CD14-positive monocyte (primary cell): ENCODE measurements at regions of chr18 and their contacts with region 1.

Region 1: DNA sequence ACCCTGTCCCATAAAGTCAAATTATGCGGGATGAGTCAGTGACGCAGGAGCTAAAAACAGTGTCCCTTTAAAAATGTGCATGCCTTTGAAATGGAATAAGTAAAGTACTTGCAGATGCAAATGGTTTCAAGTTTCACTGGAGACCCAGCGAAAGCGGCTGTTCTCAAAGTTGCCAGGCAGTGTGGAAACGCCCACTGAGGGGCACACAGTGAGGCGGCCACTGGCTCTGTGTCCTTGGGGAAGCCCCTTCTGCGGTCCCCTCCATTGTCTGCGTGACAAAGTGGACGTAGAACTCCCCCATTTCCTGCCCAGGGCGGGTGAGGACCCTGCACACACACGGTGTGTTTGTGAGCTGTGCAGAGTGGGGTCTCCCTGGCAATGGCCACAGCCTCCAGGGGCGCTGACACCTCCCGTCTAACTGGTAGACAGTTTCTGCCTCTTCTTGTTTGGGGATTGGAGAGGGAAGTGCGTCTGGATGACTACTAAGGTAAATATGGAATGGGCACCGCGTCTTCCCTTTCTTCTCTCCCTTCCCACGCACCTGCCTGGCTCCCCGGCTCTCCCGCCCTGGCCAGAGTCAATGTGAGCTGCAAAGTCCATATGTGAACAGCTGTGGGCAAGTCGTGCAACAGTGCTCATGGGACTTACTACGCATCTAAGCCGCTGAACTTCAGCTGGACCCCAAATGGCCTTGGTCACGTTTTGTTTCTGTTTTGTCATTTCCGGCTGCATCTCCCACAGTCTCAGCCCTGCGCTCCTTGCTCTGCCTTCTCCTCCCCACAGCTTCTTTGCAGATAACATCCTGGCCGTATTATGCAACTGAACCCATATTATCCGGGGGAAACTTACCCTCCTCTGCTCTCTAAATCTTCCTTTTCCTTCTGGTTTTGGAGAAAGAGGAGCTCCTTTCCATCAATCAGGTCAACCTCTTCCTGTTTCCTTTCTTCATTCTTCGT is 33.7 kb upstream of the ZNF516 start:
- DNase-seq: peak; percentile 60 to 78 (median 76)
- H3K4me3 ChIP-seq: peak overlapping the region; percentile 38 to 80 (median 50)
- H3K4me3 Mint-ChIP-seq: peak overlapping the region; percentile 90 to 98
- H3K27ac ChIP-seq: peak overlapping the region; percentile 43 to 87
- H3K27ac Mint-ChIP-seq: peak overlapping the region; percentile 90 to 93 (median 92)
- H3K4me1 ChIP-seq: peaks cover 15 to 22% of the 10 kb centered on the region in 2 donors
- H3K4me1 Mint-ChIP-seq: peaks cover 28% of the 10 kb centered on the region
- H3K27me3 ChIP-seq: no peaks in the 10 kb centered on the region
- H3K27me3 Mint-ChIP-seq: peaks cover 0 to 7% (median 2%) of the 10 kb centered on the region in 3 donors
- CTCF ChIP-seq: no peak

Region 2: GRCh38 chr18:76565238-76566180 is 36.8 kb after region 1 on chr18:
- intact Hi-C with region 1: no loop called
- DNase-seq: peak; percentile 90 to 97 (median 95)
- H3K4me3 ChIP-seq: peak overlapping the region; percentile 34 to 78 (median 56)
- H3K4me3 Mint-ChIP-seq: peak overlapping the region; percentile 70 to 88
- H3K27ac ChIP-seq: peak overlapping the region; percentile 87 to 93
- H3K27ac Mint-ChIP-seq: peak overlapping the region; percentile 93 to 99 (median 95)
- H3K4me1 ChIP-seq: peaks cover 78% of the 10 kb centered on the region in 2 donors
- H3K4me1 Mint-ChIP-seq: peaks cover 75% of the 10 kb centered on the region
- H3K27me3 ChIP-seq: no peaks in the 10 kb centered on the region
- H3K27me3 Mint-ChIP-seq: peaks cover 0 to 3% (median 0%) of the 10 kb centered on the region in 3 donors
- CTCF ChIP-seq: no peak

Region 3: GRCh38 chr18:76592981-76593381 is 64.2 kb after region 1 on chr18:
- intact Hi-C with region 1: loop called in 1 of 2 experiments (anchors 5 kb)
- DNase-seq: no peak
- H3K4me3 ChIP-seq: no peak overlapping the region
- H3K4me3 Mint-ChIP-seq: no peak overlapping the region
- H3K27ac ChIP-seq: no peak overlapping the region
- H3K27ac Mint-ChIP-seq: no peak overlapping the region
- H3K4me1 ChIP-seq: peaks cover 25 to 31% of the 10 kb centered on the region in 2 donors
- H3K4me1 Mint-ChIP-seq: peaks cover 34% of the 10 kb centered on the region
- H3K27me3 ChIP-seq: no peaks in the 10 kb centered on the region
- H3K27me3 Mint-ChIP-seq: peaks cover 0 to 4% (median 4%) of the 10 kb centered on the region in 3 donors
- CTCF ChIP-seq: no peak

Region 4: GRCh38 chr18:76620321-76621170 is 91.8 kb after region 1 on chr18:
- intact Hi-C with region 1: loop called in 1 of 2 experiments (anchors 5 kb)
- DNase-seq: peak; percentile 68 to 78 (median 74)
- H3K4me3 ChIP-seq: peak overlapping the region; percentile 40 to 73 (median 61)
- H3K4me3 Mint-ChIP-seq: peak overlapping the region; percentile 77 to 93
- H3K27ac ChIP-seq: peak overlapping the region; percentile 37 to 65
- H3K27ac Mint-ChIP-seq: peak overlapping the region; percentile 42 to 90 (median 72)
- H3K4me1 ChIP-seq: peaks cover 36 to 37% of the 10 kb centered on the region in 2 donors
- H3K4me1 Mint-ChIP-seq: peaks cover 35% of the 10 kb centered on the region
- H3K27me3 ChIP-seq: no peaks in the 10 kb centered on the region
- H3K27me3 Mint-ChIP-seq: peaks cover 0 to 1% (median 0%) of the 10 kb centered on the region in 3 donors
- CTCF ChIP-seq: peak; percentile 83

Region 5: GRCh38 chr18:76953583-76954233 is 425.0 kb after region 1 on chr18:
- intact Hi-C with region 1: no loop called
- DNase-seq: no peak
- H3K4me3 ChIP-seq: no peak overlapping the region
- H3K4me3 Mint-ChIP-seq: no peak overlapping the region
- H3K27ac ChIP-seq: no peak overlapping the region
- H3K27ac Mint-ChIP-seq: no peak overlapping the region
- H3K4me1 ChIP-seq: no peaks in the 10 kb centered on the region
- H3K4me1 Mint-ChIP-seq: no peaks in the 10 kb centered on the region
- H3K27me3 ChIP-seq: no peaks in the 10 kb centered on the region
- H3K27me3 Mint-ChIP-seq: no peaks in the 10 kb centered on the region
- CTCF ChIP-seq: no peak